Panc1 (cell line): ENCODE measurements at regions of chr1 and their contacts with region 1.

Region 1: GRCh38 chr1:100921109-100921706 is 25.3 kb downstream of the SLC30A7 start:
- DNase-seq: peak; percentile 5
- ATAC-seq: no peak
- H3K4me3 ChIP-seq: no peak overlapping the region
- H3K27ac ChIP-seq: no peak overlapping the region
- H3K4me1 ChIP-seq: no peaks in the 10 kb centered on the region
- H3K27me3 ChIP-seq: no peaks in the 10 kb centered on the region
- CTCF ChIP-seq: peak; percentile 49; the same call in 1 of the 2 replicates

Region 2: GRCh38 chr1:101238681-101239094 is 317.5 kb after region 1 on chr1:
- CTCF ChIA-PET with region 1: no interaction called
- POLR2A ChIA-PET with region 1: no interaction called
- in situ Hi-C with region 1: no loop called
- intact Hi-C with region 1: loop called (anchors 2 kb)
- DNase-seq: peak; percentile 52
- ATAC-seq: peak; percentile 86
- H3K4me3 ChIP-seq: no peak overlapping the region
- H3K27ac ChIP-seq: no peak overlapping the region
- H3K4me1 ChIP-seq: no peaks in the 10 kb centered on the region
- H3K27me3 ChIP-seq: peaks cover 5% of the 10 kb centered on the region
- CTCF ChIP-seq: peak; percentile 91